Heart right ventricle (tissue), 16 donors: ENCODE measurements at regions of chr20 and their contacts with region 1.

Region 1: DNA sequence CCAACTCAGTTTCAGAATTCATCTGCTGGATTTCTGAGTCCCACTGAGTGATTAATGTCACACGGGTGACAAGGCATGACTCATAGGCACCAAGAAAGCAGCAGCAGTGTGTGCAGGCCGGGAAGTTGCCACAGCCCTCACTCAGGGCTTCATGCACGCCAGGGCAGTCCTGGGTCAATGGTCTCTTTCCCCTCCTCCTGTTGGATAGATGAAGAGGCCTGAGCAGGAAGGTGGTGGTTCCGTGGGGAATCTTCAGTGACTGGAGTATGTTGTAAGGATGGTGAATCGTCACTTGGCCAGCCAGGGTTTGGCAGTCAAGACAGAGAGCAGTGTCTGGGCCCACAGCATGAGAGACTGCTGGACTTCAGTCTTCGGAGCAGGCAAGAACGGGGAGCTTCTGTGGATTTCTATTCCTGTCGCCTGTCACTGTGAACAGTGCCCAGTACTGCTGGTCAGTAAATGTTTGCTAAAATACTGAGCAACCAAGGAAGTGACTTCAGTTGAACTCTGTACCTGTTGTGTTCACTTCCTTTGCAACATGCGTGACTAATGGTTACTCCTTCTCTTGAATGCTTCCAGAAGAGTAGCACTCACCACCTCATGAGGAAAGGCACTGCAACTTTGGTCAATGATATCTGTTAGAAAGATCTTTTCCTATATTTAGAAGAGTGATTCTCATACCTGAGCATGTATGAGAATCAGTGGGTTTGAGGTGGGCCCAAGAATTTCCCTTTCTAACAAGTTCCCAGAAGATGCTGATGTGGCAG is 62.0 kb upstream of the CD93 start:
- DNase-seq: peak in 1 of 2 donors; percentile 46
- ATAC-seq: peak in 5 of 8 donors; percentile 17 to 65 (median 43)
- H3K4me3 ChIP-seq: peak overlapping the region in 1 of 10 donors; percentile 13
- H3K27ac ChIP-seq: peak overlapping the region; percentile 4 to 92 (median 66)
- H3K4me1 ChIP-seq: peaks cover 11 to 92% (median 56%) of the 10 kb centered on the region in 9 donors
- H3K27me3 ChIP-seq: no peaks in the 10 kb centered on the region
- CTCF ChIP-seq: no peak

Region 2: DNA sequence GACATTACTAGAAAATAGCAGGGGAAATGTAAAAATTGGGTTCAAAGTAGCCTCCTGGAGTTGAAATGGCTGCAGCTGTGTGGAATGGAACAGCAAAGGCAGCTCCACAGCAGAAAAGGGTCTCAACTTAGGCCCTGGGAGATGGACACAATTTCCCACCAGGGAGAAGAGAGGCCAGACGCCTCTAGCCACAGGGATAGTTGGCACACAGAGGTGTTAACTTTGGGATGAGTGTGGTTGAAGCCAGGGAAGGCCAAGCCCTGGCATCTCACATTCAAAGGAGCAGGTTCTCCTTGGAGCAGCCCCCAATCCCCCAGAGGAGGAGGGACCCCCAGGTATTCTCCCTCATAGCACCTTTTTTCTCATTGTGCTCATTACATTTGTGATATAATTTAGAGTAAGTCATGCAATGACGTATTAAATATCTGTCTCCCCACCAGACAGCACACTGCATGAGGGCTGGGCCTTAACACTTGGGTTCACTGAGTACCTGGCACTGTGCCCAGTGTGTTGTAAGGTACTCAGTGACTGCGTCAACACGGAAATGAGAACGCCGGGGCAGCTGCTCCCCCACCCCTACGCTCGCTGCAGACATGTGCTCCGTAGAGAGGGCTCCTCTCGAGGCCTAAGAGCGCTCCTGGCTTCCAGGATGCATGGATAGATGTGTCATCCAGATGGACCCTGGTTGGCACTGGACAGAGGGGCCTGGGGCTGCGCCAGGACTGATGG is 14.0 kb after region 1 on chr20:
- intact Hi-C with region 1: loop called in 1 of 10 experiments (anchors 1 kb)
- DNase-seq: peak; percentile 72 to 80
- ATAC-seq: peak; percentile 46 to 92 (median 85)
- H3K4me3 ChIP-seq: no peak overlapping the region
- H3K27ac ChIP-seq: peak overlapping the region; percentile 24 to 87 (median 68)
- H3K4me1 ChIP-seq: peaks cover 8 to 70% (median 60%) of the 10 kb centered on the region in 9 donors
- H3K27me3 ChIP-seq: no peaks in the 10 kb centered on the region
- CTCF ChIP-seq: no peak

Region 3: GRCh38 chr20:23193801-23194382 is 45.7 kb after region 1 on chr20:
- intact Hi-C with region 1: loop called in 1 of 10 experiments (anchors 10 kb)
- DNase-seq: no peak
- ATAC-seq: no peak
- H3K4me3 ChIP-seq: no peak overlapping the region
- H3K27ac ChIP-seq: no peak overlapping the region
- H3K4me1 ChIP-seq: peaks cover 0 to 9% (median 0%) of the 10 kb centered on the region in 9 donors
- H3K27me3 ChIP-seq: no peaks in the 10 kb centered on the region
- CTCF ChIP-seq: no peak